SK-N-SH (cell line): ENCODE measurements at regions of chr17 and their contacts with region 1.

Region 1: GRCh38 chr17:56939901-56940343 is 20.9 kb downstream of the COIL start:
- DNase-seq: peak; percentile 79
- H3K4me3 ChIP-seq: no peak overlapping the region; a peak in 1 of 4 replicates
- H3K27ac ChIP-seq: no peak overlapping the region
- H3K4me1 ChIP-seq: peaks cover 0 to 10% of the 10 kb centered on the region in 2 experiments; a peak in 1 of 4 replicates
- H3K27me3 ChIP-seq: no peaks in the 10 kb centered on the region
- CTCF ChIP-seq: peak; percentile 94
- EP300 ChIP-seq: no peak
- RAD21 ChIP-seq: peak; percentile 91

Region 2: GRCh38 chr17:56754523-56755208 is 185.3 kb before region 1 on chr17:
- CTCF ChIA-PET with region 1: no interaction called
- POLR2A ChIA-PET with region 1: no interaction called
- DNase-seq: peak; percentile 60
- H3K4me3 ChIP-seq: no peak overlapping the region
- H3K27ac ChIP-seq: peak overlapping the region; percentile 2 to 73; a peak in 3 of 4 replicates
- H3K4me1 ChIP-seq: peaks cover 3 to 18% of the 10 kb centered on the region in 2 experiments; a peak in 3 of 4 replicates
- H3K27me3 ChIP-seq: no peaks in the 10 kb centered on the region
- CTCF ChIP-seq: no peak
- EP300 ChIP-seq: peak in 1 of 2 experiments; percentile 37; a peak in 1 of 4 replicates
- RAD21 ChIP-seq: no peak

Region 3: GRCh38 chr17:56833809-56834379 is 106.0 kb before region 1 on chr17 and contains the starts of genes C17orf67 and DGKE:
- CTCF ChIA-PET with region 1: interaction called, 18 read pairs
- POLR2A ChIA-PET with region 1: no interaction called
- DNase-seq: peak; percentile 100
- H3K4me3 ChIP-seq: peak within 1 kb of the TSS; percentile 66 to 74
- H3K27ac ChIP-seq: peak within 1 kb of the TSS; percentile 66
- H3K4me1 ChIP-seq: peaks cover 9 to 21% of the 10 kb centered on the region in 2 experiments; a peak in 3 of 4 replicates
- H3K27me3 ChIP-seq: no peaks in the 10 kb centered on the region
- CTCF ChIP-seq: no peak
- EP300 ChIP-seq: no peak; a peak in 1 of 4 replicates
- RAD21 ChIP-seq: no peak
- polyA plus RNA-seq, gene C17orf67: 1.6 and 1.7 TPM in 2 replicates
- polyA plus RNA-seq, gene DGKE: 2.4 and 2.8 TPM in 2 replicates

Region 4: DNA sequence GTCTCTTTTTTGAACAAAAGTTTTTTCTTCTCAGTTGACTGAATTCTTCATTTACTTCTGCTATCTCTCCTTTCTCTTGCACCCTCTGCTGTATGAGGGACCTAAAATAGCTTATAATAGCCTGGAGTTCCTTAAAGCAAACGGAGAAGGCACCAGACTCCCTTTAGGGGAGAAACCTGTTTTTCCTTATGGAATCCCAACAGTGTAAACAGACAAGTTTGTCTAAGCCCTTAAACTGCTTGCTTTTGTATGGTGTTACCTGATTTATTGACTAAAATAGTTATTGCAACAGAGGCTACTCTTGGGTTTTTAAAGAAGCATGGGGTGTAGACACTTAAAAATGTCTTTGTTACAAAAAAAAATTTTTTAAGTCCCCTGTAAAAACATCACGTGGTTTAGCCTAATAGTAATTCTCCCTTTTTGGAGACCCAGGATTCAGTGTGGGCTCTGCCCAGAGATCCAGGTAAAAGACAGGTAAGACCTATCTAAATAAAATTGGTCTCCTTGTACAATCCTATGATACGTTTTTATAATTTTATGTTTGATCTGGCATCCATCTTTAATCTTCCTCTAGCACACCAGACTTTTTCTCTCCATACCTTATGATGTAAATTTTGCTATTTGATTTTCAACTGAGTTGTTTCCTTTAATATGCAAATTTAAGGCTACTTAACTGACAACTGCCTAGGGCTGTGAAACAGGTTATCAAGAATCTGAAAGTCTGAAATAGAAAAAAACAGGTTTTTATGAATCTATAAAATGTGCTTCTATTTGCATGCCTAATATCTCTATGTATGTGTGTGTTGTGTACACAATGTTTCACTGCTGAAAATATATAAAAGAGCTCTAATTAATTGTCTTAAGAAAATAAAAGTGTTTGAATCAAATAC is 13.0 kb before region 1 on chr17:
- CTCF ChIA-PET with region 1: interaction called, 13 read pairs
- POLR2A ChIA-PET with region 1: no interaction called
- DNase-seq: no peak
- H3K4me3 ChIP-seq: no peak overlapping the region
- H3K27ac ChIP-seq: no peak overlapping the region
- H3K4me1 ChIP-seq: no peaks in the 10 kb centered on the region
- H3K27me3 ChIP-seq: no peaks in the 10 kb centered on the region
- CTCF ChIP-seq: no peak
- EP300 ChIP-seq: no peak
- RAD21 ChIP-seq: no peak